Heart left ventricle (tissue), 16 donors: ENCODE measurements at regions of chr15 and their contacts with region 1.

Region 1: DNA sequence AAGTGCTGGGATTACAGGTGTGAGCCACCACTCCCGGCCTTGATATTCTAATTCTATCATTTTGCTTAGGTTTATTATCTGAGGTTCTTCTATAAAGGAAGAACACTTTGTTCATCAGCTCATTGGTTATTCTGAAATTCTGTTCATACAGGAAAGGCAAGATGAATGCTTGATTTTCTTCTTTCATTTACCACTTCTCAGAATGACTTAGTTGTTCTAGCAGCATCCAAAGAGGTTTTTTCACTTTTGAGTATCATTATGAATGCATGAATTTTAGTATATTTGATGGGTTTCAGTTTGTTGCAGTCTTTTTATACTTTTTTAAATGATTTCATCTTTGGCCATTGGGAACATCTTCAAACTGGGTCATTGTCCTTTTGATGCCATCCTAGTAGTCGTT is 51.8 kb downstream of the RNF111 start:
- DNase-seq: no peak
- ATAC-seq: no peak
- H3K4me3 ChIP-seq: no peak overlapping the region
- H3K27ac ChIP-seq: no peak overlapping the region
- H3K4me1 ChIP-seq: peaks cover 0 to 19% (median under 1%) of the 10 kb centered on the region in 12 donors
- H3K27me3 ChIP-seq: no peaks in the 10 kb centered on the region
- CTCF ChIP-seq: no peak
- POLR2A ChIP-seq: no peak

Region 2: DNA sequence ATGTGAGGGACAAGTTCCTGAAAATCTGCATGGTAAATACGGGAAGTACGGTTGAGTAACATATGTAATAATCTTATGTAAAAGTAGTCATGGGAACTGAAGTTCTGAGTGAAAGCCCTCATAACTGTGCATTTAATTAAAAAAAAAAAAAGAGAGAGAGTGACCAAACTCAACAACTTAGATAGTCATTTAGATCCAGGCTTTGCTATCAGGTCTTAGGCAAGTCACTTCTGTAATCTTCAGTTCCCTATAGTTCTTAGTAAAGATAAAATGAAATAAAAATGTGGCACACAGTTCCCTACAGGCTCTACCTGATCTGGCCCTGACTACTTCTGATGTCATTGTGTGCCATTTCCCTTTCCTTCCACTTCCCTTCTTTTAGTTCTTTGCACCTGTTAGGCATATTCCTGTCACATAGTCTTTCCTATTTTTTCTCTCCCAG is 36.8 kb before region 1 on chr15:
- intact Hi-C with region 1: loop called in 1 of 10 experiments (anchors 5 kb)
- DNase-seq: no peak
- ATAC-seq: no peak
- H3K4me3 ChIP-seq: no peak overlapping the region
- H3K27ac ChIP-seq: peak overlapping the region in 1 of 12 donors; percentile 68
- H3K4me1 ChIP-seq: peaks cover 0 to 69% (median 0%) of the 10 kb centered on the region in 12 donors
- H3K27me3 ChIP-seq: no peaks in the 10 kb centered on the region
- CTCF ChIP-seq: no peak
- POLR2A ChIP-seq: no peak